ENCODE measurements at regions of chr3 and their contacts with region 1.

Region 1: DNA sequence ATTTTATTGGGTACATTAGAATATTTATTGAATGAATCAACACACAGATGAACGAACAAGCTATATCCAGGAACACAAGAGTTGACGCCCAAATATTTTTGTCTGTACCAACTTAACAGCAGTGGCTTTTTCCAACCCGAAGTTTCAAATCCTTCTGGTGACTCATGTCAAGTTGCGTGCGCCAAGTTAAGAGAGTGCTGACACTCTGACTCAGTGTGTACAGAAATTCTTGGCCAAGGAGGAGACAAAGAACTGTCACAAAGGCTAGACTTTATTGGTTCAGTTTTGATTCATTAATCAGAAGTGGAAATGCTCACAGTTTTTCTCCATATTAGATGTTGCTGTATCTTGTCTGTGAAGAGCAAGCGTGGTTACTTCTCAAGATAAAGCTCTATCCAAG is 59.6 kb upstream of the TSC22D2 start:
- DNase-seq: no peak
- ATAC-seq: peak; percentile 77

Region 2: GRCh38 chr3:150253622-150254021 is 94.9 kb before region 1 on chr3:
- intact Hi-C with region 1: loop called (anchors 2 kb)
- DNase-seq: no peak
- ATAC-seq: no peak

Measured in Right ventricle myocardium inferior (tissue), 1 donor.